ENCODE measurements at regions of chr3 and their contacts with region 1.

Region 1: GRCh38 chr3:10263646-10264363 is 15.5 kb downstream of the TATDN2 start:
- DNase-seq: peak; percentile 36 to 80 (median 72)
- ATAC-seq: peak; percentile 98
- H3K4me3 ChIP-seq: peak overlapping the region; percentile 19 to 38
- H3K4me3 Mint-ChIP-seq: peak overlapping the region; percentile 68
- H3K27ac ChIP-seq: peak overlapping the region; percentile 20 to 73
- H3K27ac Mint-ChIP-seq: peak overlapping the region; percentile 86
- H3K4me1 ChIP-seq: peaks cover 61% of the 10 kb centered on the region
- H3K4me1 Mint-ChIP-seq: peaks cover 78% of the 10 kb centered on the region
- H3K27me3 ChIP-seq: no peaks in the 10 kb centered on the region
- H3K27me3 Mint-ChIP-seq: no peaks in the 10 kb centered on the region
- CTCF ChIP-seq: peak; percentile 56

Region 2: DNA sequence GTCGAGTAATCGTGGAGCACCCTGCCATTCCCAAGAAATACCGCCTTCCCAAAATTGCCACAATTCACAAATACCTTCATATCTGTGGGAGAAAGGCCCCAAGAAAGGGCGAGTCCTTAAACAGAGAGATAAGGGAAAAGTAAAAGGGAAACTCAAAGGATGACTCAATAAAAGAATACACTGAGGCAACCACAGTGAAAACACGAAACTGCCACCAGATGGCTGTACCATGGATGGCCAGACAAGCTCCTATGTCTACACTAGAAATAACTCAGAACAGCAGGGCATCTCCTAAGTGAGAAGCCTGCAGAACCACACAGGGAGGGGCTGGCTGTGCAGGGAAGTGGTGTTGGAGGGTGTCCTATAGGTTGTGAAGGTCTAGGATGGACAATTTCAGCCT is 1039.3 kb before region 1 on chr3:
- CTCF ChIA-PET with region 1: no interaction called
- POLR2A ChIA-PET with region 1: no interaction called
- intact Hi-C with region 1: no loop called
- DNase-seq: no peak
- ATAC-seq: no peak
- H3K4me3 ChIP-seq: no peak overlapping the region
- H3K4me3 Mint-ChIP-seq: no peak overlapping the region
- H3K27ac ChIP-seq: no peak overlapping the region
- H3K27ac Mint-ChIP-seq: no peak overlapping the region
- H3K4me1 ChIP-seq: no peaks in the 10 kb centered on the region
- H3K4me1 Mint-ChIP-seq: no peaks in the 10 kb centered on the region
- H3K27me3 ChIP-seq: no peaks in the 10 kb centered on the region
- H3K27me3 Mint-ChIP-seq: no peaks in the 10 kb centered on the region
- CTCF ChIP-seq: no peak

Region 3: DNA sequence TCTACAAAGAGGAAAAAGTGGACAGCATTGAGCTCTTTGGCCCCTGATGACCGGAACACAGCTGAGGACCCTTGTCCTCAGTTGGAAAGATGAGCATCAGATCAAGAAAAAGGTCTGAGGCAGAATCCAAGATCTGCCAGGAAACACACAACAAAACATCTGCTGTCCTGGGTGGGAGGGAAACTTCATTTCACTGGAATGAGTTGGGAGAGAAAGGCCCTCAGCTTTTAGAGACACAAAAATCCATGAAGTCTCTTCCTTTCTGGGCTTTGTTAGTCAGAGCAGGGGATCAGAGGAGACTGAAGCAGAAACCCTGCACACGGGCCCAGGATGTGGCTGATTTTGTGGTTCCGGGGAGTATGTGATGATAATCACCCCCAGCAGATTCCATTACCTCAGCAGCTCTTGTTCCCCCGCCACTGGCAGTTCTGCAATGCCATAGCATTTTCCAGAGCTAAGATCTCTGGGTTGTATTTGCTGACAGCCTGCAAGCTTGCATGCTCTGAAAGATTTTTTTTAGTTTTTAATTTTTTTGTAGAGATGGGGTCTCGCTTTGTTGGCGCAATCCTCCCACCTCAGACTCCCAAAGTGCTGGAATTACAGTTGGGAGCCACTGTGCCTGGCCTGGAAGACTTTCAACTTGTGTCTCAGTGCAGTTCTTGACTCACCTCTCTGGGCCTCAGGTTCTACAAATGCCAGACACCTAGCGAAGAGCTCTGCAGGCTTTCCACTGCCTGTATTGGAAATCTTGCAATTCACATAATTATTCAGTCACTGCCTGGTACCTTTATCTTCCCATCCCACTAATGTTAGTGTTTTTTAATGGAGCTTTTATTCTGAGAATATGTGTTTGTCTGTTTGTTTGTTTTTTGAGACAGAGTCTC is 21.4 kb before region 1 on chr3:
- CTCF ChIA-PET with region 1: interaction called, 4 read pairs
- POLR2A ChIA-PET with region 1: interaction called, 29 read pairs
- intact Hi-C with region 1: loop called in 1 of 2 experiments (anchors 1 kb)
- DNase-seq: peak; percentile 24 to 91 (median 75)
- ATAC-seq: peak; percentile 91
- H3K4me3 ChIP-seq: peak overlapping the region in 1 of 2 experiments; percentile 11
- H3K4me3 Mint-ChIP-seq: peak overlapping the region; percentile 73
- H3K27ac ChIP-seq: peak overlapping the region; percentile 33 to 70
- H3K27ac Mint-ChIP-seq: peak overlapping the region; percentile 90
- H3K4me1 ChIP-seq: peaks cover 39% of the 10 kb centered on the region
- H3K4me1 Mint-ChIP-seq: peaks cover 52% of the 10 kb centered on the region
- H3K27me3 ChIP-seq: no peaks in the 10 kb centered on the region
- H3K27me3 Mint-ChIP-seq: no peaks in the 10 kb centered on the region
- CTCF ChIP-seq: no peak

Region 4: DNA sequence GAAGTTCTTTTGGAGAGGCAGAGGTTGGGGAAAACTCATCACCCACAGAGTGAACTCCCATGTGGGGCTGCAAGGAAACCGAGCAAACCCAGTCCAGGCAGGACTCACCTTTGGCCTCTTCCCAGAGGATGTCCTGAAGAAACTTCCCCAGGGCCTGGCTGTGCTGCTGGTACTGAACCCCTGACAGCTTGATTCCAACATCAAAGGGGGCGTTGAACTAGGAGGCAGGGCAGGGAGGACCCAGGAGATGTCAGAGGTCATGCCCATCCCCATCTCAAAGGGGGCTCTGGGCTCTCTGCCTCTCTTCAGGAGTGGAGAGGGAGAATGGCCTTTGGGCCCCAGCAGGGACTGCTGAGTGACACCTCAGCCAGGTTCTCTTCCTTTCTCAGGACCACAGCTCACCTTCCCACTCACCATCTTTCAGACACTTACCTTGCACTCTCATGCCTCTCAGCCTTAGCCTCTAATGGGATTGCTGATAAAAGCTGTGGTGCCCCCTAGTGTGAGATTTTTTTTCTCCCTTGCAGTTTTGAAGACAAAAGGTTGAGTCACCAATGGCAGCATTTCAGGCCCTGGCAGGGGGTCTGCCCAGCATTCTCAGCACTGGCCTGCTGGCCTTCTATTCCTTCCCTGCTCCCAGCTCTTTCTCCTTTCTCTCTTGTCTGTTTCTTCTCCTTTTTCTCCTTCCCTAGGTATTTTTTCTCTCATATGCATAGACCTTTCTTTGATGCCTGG is 23.0 kb after region 1 on chr3:
- CTCF ChIA-PET with region 1: interaction called, 10 read pairs
- POLR2A ChIA-PET with region 1: no interaction called
- intact Hi-C with region 1: no loop called
- DNase-seq: peak in 2 of 9 experiments; percentile 41 to 67
- ATAC-seq: peak; percentile 34
- H3K4me3 ChIP-seq: no peak overlapping the region
- H3K4me3 Mint-ChIP-seq: no peak overlapping the region
- H3K27ac ChIP-seq: no peak overlapping the region
- H3K27ac Mint-ChIP-seq: peak overlapping the region; percentile 61
- H3K4me1 ChIP-seq: peaks cover 13% of the 10 kb centered on the region
- H3K4me1 Mint-ChIP-seq: peaks cover 20% of the 10 kb centered on the region
- H3K27me3 ChIP-seq: no peaks in the 10 kb centered on the region
- H3K27me3 Mint-ChIP-seq: no peaks in the 10 kb centered on the region
- CTCF ChIP-seq: peak; percentile 32